Heart left ventricle (tissue), 16 donors: ENCODE measurements at regions of chr14 and their contacts with region 1.

Region 1: GRCh38 chr14:68979021-68979782 is at the start of gene ACTN1:
- DNase-seq: peak; percentile 94 to 96 (median 95)
- ATAC-seq: peak; percentile 86 to 91 (median 89)
- H3K4me3 ChIP-seq: peak within 1 kb of the TSS; percentile 72 to 100 (median 92)
- H3K27ac ChIP-seq: peak within 1 kb of the TSS; percentile 85 to 100 (median 96)
- H3K4me1 ChIP-seq: peaks cover 15 to 45% (median 36%) of the 10 kb centered on the region in 12 donors
- H3K27me3 ChIP-seq: no peaks in the 10 kb centered on the region
- CTCF ChIP-seq: no peak
- POLR2A ChIP-seq: peak in 1 of 2 donors; percentile 92
- total RNA-seq, gene ACTN1: 63.6 to 252 (median 110) TPM

Region 2: GRCh38 chr14:68924186-68925158 is 54.7 kb before region 1 on chr14:
- intact Hi-C with region 1: loop called in 2 of 10 experiments (anchors 5 to 10 kb)
- DNase-seq: peak in 4 of 5 donors; percentile 51 to 73 (median 60)
- ATAC-seq: peak; percentile 65 to 87 (median 74)
- H3K4me3 ChIP-seq: no peak overlapping the region
- H3K27ac ChIP-seq: peak overlapping the region in 11 of 12 donors; percentile 40 to 98 (median 73)
- H3K4me1 ChIP-seq: peaks cover 7 to 71% (median 46%) of the 10 kb centered on the region in 12 donors
- H3K27me3 ChIP-seq: no peaks in the 10 kb centered on the region
- CTCF ChIP-seq: no peak
- POLR2A ChIP-seq: no peak

Region 3: DNA sequence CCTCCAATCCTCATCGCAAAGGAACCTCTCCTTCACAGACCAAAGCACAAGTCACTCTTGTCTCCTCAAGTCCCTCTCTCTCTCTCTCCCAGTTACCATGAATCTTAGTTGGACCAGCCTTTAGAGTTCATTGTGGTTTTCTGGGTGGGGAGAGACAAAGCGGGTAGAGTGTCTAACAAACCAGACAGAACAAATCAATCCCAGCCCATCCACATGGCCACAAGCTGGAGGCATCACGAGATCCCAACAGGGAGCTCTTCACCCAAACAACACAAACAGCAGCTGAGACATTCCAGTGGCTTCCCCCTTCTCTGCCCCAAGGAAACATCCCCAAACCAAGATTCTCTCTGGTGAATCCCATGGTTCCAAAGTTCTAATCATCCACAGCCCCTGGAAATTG is 22.5 kb before region 1 on chr14:
- intact Hi-C with region 1: loop called in 1 of 10 experiments (anchors 2 kb)
- DNase-seq: no peak
- ATAC-seq: no peak
- H3K4me3 ChIP-seq: no peak overlapping the region
- H3K27ac ChIP-seq: peak overlapping the region in 4 of 12 donors; percentile 70 to 98 (median 82)
- H3K4me1 ChIP-seq: peaks cover 33 to 98% (median 82%) of the 10 kb centered on the region in 12 donors
- H3K27me3 ChIP-seq: no peaks in the 10 kb centered on the region
- CTCF ChIP-seq: no peak
- POLR2A ChIP-seq: no peak

Region 4: DNA sequence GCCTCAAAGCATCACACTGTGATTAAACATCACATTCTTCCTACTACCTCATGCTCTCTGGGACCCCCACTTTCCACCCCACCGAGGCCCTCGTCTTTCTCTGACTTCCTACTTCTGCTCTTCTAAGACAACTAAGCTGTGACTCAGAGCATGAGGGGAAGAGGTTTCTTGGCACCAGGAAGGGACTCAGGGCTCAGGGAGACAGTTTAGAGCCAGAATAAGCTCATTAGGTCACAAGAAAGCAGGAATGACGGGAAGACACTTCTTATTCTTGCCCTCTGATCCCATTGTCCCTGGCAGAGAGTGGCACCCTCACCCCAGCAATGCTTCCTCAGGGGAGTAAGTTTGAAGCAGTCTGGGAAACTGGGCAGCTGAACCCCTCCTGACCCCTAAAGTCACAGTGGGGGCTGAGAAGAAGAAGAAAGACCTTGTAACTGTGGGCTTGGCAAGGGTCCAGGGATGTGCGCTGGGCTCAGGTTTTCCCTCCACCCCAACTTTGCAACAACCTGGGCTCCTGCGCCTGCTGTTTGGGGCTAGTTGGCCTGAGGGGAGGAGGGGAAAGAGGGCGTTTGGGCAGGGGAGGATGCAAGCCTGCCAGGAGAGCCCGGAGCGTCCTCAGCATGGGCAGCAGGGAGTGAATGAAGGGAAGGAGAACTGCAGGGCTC is 64.5 kb after region 1 on chr14:
- intact Hi-C with region 1: loop called in 4 of 10 experiments (anchors 5 to 10 kb)
- DNase-seq: peak in 3 of 5 donors; percentile 32 to 42 (median 42)
- ATAC-seq: peak in 3 of 4 donors; percentile 41 to 55 (median 50)
- H3K4me3 ChIP-seq: no peak overlapping the region
- H3K27ac ChIP-seq: peak overlapping the region in 10 of 12 donors; percentile 1 to 92 (median 68)
- H3K4me1 ChIP-seq: peaks cover 14 to 93% (median 58%) of the 10 kb centered on the region in 12 donors
- H3K27me3 ChIP-seq: no peaks in the 10 kb centered on the region
- CTCF ChIP-seq: no peak
- POLR2A ChIP-seq: no peak

Region 5: GRCh38 chr14:69055999-69056788 is 77.0 kb after region 1 on chr14:
- intact Hi-C with region 1: no loop called
- DNase-seq: no peak
- ATAC-seq: peak in 3 of 4 donors; percentile 41 to 56 (median 44)
- H3K4me3 ChIP-seq: no peak overlapping the region
- H3K27ac ChIP-seq: peak overlapping the region in 2 of 12 donors; percentile 9 to 17
- H3K4me1 ChIP-seq: peaks cover 2 to 48% (median 24%) of the 10 kb centered on the region in 12 donors
- H3K27me3 ChIP-seq: no peaks in the 10 kb centered on the region
- CTCF ChIP-seq: peak in 5 of 12 donors; percentile 8 to 27 (median 16)
- POLR2A ChIP-seq: no peak